ENCODE measurements at regions of chr14 and their contacts with region 1.

Region 1: GRCh38 chr14:54566410-54567223 is at the start of gene SAMD4A:
- DNase-seq: peak; percentile 39
- H3K4me3 ChIP-seq: peak within 1 kb of the TSS; percentile 57 to 78 (median 71)
- H3K27ac ChIP-seq: peak within 1 kb of the TSS; percentile 86 to 99 (median 94)
- H3K4me1 ChIP-seq: peaks cover 9 to 67% (median 14%) of the 10 kb centered on the region in 3 donors
- H3K27me3 ChIP-seq: peaks cover 0 to 33% (median 0%) of the 10 kb centered on the region in 4 donors
- CTCF ChIP-seq: peak in 3 of 6 experiments; percentile 7 to 39 (median 25)
- POLR2A ChIP-seq: peak in 2 of 4 donors; percentile 56 to 60
- total RNA-seq, gene SAMD4A: 2.9 to 19.5 (median 3.9) TPM

Region 2: GRCh38 chr14:54488646-54489317 is 77.8 kb before region 1 on chr14 and contains the start of gene GMFB:
- intact Hi-C with region 1: no loop called
- DNase-seq: peak; percentile 68
- H3K4me3 ChIP-seq: peak within 1 kb of the TSS; percentile 50 to 88 (median 76)
- H3K27ac ChIP-seq: peak within 1 kb of the TSS; percentile 90 to 96 (median 95)
- H3K4me1 ChIP-seq: peaks cover 0 to 59% (median 11%) of the 10 kb centered on the region in 3 donors
- H3K27me3 ChIP-seq: no peaks in the 10 kb centered on the region
- CTCF ChIP-seq: peak in 5 of 6 experiments; percentile 22 to 57 (median 27)
- POLR2A ChIP-seq: peak in 2 of 4 donors; percentile 74 to 80
- total RNA-seq, gene GMFB: 10.2 to 69.8 (median 36.2) TPM

Region 3: DNA sequence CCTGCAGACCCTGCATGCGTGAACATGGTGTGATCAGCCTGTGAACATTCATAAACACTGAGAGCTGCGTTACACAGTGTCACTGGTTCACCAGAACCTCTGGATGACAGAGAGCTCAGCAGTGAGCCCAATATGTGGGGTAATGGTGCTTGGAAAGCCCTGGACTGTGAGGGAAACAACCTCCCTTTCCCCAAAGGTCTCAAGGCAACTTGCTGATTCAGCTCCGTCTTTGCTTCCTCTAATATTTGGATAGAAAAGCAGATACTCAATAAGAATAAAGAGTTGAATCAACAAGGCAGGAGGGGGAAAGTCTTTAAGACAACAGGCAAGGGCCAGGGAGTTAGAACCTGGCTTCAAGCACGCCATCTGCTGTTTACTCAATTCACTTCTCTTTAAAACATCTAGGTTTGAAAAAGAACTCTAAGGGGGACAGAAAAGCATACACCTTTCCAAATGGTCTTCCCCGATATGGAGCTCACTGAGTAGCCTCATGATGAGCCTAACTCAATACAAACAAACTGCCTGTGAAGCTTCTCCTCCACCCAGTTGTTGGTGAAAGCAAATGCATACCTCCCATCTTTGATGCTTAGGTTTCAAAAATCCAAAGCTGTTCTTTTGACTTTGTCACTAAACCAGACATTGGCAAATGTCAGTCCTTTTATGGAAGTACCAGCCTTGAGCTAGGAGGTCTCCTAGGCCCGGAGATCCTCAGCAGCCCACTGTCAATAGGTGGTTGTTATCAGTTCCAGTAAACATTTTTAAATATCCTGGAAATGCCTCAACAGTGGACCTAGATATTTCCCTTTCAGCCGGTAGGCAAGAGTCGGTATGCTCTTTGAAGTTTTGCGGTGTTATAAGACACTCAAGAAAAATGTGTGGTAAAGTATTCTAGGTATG is 76.4 kb after region 1 on chr14:
- intact Hi-C with region 1: no loop called
- DNase-seq: no peak
- H3K4me3 ChIP-seq: no peak overlapping the region
- H3K27ac ChIP-seq: no peak overlapping the region
- H3K4me1 ChIP-seq: no peaks in the 10 kb centered on the region
- H3K27me3 ChIP-seq: no peaks in the 10 kb centered on the region
- CTCF ChIP-seq: peak in 1 of 6 experiments; percentile 12
- POLR2A ChIP-seq: no peak

Region 4: DNA sequence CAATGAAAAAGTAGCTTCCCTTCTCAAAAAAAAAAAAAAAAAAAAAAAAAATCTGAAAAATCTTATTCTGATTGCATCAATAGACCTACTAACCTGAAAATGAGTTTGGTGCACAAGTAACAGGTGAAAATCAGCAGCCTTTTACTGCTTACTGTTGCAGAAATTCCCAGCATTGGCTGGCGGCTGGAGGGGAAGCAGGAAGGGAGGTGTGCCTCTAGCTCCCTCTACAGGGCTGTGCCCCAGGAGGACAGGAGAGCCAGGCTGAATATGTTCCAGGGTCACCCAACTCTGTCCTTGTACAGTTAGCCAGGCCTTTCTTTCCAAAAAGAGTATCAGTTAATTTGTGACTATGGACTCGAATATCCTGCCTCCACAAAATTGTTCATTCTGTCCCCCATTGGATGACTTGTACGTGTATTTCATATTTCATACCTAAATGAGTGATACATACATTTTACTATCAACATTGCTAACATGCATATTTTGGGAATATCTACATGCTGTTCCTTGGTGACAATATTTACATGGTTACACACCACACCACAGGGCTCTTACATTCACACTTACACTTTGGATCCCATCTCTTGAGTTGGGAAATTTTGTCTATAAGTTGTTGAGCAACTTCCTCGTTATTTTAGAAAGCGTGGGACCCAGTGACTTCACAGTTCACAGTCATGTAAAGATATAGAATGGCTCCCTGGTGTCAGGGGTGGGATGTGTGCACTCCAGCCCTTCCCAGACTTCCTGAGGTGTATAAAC is 125.1 kb after region 1 on chr14:
- intact Hi-C with region 1: loop called (anchors 5 kb)
- DNase-seq: no peak
- H3K4me3 ChIP-seq: no peak overlapping the region
- H3K27ac ChIP-seq: peak overlapping the region in 1 of 4 donors; percentile 7
- H3K4me1 ChIP-seq: peaks cover 0 to 24% (median 2%) of the 10 kb centered on the region in 3 donors
- H3K27me3 ChIP-seq: no peaks in the 10 kb centered on the region
- CTCF ChIP-seq: peak; percentile 66 to 88 (median 74)
- POLR2A ChIP-seq: no peak

Region 5: DNA sequence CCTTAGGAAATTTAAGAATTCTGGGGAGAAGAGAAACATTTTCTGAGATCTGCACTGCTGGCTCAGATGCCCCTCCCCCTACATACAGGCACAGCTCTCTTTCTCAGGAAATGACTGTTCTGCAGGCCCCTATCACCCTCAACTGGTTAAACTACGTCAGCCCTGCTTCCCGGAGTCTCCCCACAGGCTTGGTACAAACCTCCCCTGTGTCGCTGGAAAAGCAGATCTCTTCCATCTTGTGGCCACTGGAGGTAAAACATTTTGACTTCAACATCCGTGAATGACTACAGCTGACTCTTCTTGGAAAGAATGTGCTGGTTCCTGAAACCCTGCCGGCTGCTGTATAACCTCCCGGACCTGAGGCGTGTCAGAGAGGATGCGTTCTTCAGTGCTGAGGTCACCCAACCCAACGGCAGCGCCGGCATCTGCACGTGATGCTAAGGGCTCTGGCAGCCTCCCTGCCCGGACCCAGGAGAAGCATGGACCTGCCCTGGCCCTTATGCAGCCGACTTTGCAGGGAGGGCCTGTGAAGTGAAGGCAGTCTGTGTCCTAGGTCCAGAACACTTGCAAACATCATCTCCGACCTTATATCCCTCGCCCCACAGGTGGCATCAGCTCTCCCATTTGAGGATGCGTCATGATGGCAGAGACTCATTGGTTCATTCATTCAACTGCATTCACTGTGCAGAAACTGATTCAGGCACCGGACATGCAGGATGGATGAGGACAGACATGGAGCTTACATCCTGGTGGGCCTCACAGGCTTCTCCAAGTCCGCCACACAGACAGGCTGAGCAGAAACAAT is 206.8 kb after region 1 on chr14:
- intact Hi-C with region 1: loop called (anchors 5 kb)
- DNase-seq: peak; percentile 64
- H3K4me3 ChIP-seq: peak overlapping the region in 1 of 4 donors; percentile 19
- H3K27ac ChIP-seq: peak overlapping the region; percentile 65 to 91 (median 86)
- H3K4me1 ChIP-seq: peaks cover 19 to 43% (median 22%) of the 10 kb centered on the region in 3 donors
- H3K27me3 ChIP-seq: peaks cover 0 to 16% (median 0%) of the 10 kb centered on the region in 4 donors
- CTCF ChIP-seq: peak; percentile 38 to 79 (median 64)
- POLR2A ChIP-seq: no peak